Heart right ventricle (tissue), 16 donors: ENCODE measurements at regions of chr10 and their contacts with region 1.

Region 1: DNA sequence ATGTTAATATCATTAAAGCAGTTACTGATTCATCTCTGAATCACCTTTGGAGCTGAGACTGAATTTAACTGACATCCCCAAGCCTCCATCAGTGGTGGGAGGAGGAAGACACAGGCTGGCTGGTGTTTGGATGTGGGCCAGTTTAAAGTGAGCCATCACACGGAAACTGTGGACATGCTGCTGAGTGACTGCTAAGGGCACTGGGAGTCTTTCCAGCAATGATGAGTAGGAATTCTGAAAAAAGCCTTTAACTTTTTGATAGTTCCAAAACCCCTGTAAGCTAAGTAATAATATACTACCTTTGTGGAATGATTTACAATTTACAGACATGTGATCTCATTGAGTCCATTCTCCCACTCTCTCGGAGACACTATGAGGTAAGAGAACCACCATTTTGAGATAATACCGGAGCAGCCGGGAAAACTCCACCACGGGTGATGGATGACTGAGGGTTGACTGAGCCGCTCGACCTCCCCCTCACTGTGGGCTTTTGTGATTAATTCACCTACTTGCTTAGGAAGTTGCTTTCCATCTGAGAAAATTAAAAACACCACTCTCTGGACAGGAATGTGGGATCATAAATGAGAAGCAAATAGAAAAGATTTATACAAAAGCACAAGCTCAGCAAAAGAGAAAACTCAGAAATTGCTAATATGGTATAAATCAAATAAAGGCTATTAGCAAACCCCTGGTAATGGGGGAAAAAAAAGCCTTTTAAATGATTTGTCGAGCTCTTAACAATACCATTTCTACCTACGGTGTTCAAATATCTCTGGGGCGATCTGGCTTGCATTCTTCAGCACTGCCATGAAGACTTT is 194.8 kb downstream of the FANK1 start:
- DNase-seq: no peak
- ATAC-seq: peak in 1 of 8 donors; percentile 48
- H3K4me3 ChIP-seq: no peak overlapping the region
- H3K27ac ChIP-seq: no peak overlapping the region
- H3K4me1 ChIP-seq: peaks cover 0 to 30% (median 0%) of the 10 kb centered on the region in 9 donors
- H3K27me3 ChIP-seq: peaks cover 0 to 4% (median 0%) of the 10 kb centered on the region in 7 donors
- CTCF ChIP-seq: no peak

Region 2: DNA sequence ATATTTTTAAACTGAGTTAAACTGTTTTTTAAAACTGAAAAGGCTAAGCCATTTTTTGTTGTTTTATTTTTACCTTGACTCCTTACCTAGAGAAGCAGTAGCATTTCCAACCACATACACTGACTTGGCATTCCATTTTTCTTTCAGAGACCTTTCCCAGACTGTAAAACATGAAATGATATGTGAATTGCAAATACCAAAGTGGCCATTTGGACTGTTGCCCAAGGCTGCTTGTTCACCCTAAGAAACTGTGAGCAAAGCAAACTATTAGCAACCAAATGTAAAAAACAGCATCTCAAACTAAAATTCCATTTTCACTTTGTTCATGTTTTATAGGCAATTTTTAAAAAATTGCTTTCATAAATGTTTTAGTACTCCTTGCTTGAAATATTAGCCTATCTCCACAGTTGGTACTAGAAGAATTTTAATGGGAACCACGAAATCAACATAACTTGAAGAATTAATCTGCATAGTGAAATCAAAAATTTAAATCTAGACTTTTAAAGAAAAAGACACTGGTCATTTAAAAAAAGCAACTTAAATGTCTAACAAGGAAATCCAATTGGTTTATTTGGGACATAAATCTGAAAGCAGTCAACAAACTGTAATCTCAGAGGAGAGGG is 278.9 kb before region 1 on chr10:
- intact Hi-C with region 1: no loop called
- DNase-seq: no peak
- ATAC-seq: no peak
- H3K4me3 ChIP-seq: no peak overlapping the region
- H3K27ac ChIP-seq: no peak overlapping the region
- H3K4me1 ChIP-seq: no peaks in the 10 kb centered on the region
- H3K27me3 ChIP-seq: no peaks in the 10 kb centered on the region
- CTCF ChIP-seq: no peak

Region 3: DNA sequence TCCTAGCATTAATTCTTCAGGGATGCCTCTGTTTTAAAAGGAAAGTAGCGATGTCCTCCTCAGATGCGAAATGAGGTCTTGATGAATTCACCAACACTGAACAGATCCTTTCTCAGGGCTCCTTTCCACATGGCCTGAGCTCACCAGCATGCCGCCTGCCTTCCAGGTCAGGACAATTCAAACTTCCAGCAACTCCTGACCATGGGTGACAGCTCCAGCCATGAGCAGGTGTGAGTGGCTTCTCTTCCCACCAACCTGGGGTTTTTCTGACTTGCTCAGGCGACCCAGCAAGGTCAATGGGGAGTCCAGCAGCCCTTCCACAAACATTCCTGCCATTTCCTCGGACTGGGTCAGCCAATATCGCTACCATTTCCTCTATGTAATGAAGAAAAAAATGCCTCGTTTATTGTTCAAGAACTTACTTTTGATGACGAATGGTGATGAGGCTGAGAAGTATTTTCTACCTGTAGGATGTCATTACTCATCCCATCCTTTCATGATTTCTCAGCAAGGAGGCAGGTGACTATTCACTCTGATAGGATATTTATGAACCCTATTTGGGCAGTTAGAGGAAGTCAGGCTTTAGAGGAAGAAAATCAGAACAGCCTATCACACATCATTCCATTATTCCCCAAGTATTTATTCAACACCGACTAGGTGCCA is 16.2 kb before region 1 on chr10:
- intact Hi-C with region 1: loop called in 1 of 10 experiments (anchors 1 kb)
- DNase-seq: no peak
- ATAC-seq: no peak
- H3K4me3 ChIP-seq: no peak overlapping the region
- H3K27ac ChIP-seq: no peak overlapping the region
- H3K4me1 ChIP-seq: no peaks in the 10 kb centered on the region
- H3K27me3 ChIP-seq: peaks cover 0 to 9% (median 0%) of the 10 kb centered on the region in 7 donors
- CTCF ChIP-seq: no peak

Region 4: GRCh38 chr10:126113046-126113445 is 21.9 kb after region 1 on chr10:
- intact Hi-C with region 1: loop called in 1 of 10 experiments (anchors 2 kb)
- DNase-seq: no peak
- ATAC-seq: no peak
- H3K4me3 ChIP-seq: no peak overlapping the region
- H3K27ac ChIP-seq: no peak overlapping the region
- H3K4me1 ChIP-seq: peaks cover 0 to 28% (median 5%) of the 10 kb centered on the region in 9 donors
- H3K27me3 ChIP-seq: peaks cover 0 to 4% (median 0%) of the 10 kb centered on the region in 7 donors
- CTCF ChIP-seq: no peak

Region 5: GRCh38 chr10:126130271-126130731 is 39.2 kb after region 1 on chr10:
- intact Hi-C with region 1: no loop called
- DNase-seq: peak; percentile 22 to 48
- ATAC-seq: peak; percentile 71 to 87 (median 76)
- H3K4me3 ChIP-seq: no peak overlapping the region
- H3K27ac ChIP-seq: peak overlapping the region in 7 of 10 donors; percentile 27 to 75 (median 65)
- H3K4me1 ChIP-seq: peaks cover 0 to 29% (median 4%) of the 10 kb centered on the region in 9 donors
- H3K27me3 ChIP-seq: no peaks in the 10 kb centered on the region
- CTCF ChIP-seq: no peak

Region 6: DNA sequence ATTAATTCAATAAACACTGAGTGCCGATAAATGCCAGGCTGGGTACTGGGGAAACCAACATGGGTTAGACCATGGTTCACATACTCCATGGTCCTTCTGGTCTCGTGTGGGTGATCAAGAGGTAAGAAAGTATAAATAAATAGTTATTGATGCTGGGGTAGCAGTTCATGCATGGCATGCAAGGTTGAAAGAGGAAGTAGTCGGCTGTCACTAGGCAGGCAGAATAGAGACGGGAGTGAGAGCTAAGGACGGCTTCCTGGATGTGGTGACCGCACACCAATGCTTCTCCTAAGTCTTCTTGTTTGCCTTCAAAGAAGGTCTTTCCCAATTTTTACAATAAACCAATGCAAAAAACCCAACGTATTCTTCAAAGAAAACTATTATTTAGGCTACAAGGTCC is 88.5 kb after region 1 on chr10:
- intact Hi-C with region 1: no loop called
- DNase-seq: no peak
- ATAC-seq: no peak
- H3K4me3 ChIP-seq: no peak overlapping the region
- H3K27ac ChIP-seq: no peak overlapping the region
- H3K4me1 ChIP-seq: no peaks in the 10 kb centered on the region
- H3K27me3 ChIP-seq: no peaks in the 10 kb centered on the region
- CTCF ChIP-seq: no peak

Region 7: DNA sequence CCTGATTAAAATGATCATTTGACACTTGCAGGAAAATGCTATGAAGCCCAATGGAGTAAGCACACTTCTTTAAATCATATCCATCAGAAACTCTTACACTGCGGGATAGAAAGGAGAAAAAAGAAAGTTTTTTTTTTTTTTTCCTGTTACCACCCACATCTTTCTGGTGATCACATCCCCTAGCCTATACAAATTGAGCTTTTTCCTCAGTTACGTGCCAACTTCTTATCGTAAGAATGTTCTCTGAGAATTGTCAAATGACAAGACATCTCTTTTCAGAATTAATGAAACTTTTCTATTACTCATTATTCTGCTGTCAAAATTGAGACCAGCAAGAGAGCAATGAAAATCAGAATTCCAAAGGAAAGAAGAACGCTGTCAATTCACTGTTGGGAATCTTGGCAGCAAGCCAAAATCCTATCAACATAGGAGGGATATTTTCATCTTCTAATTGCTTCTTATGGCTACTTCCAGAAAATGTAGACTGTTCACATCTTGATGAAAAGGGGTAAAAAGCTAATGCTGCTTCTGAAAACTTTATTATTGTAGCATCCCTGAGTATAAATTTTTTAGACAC is 117.7 kb after region 1 on chr10:
- intact Hi-C with region 1: no loop called
- DNase-seq: no peak
- ATAC-seq: no peak
- H3K4me3 ChIP-seq: no peak overlapping the region
- H3K27ac ChIP-seq: no peak overlapping the region
- H3K4me1 ChIP-seq: peaks cover 0 to 18% (median 8%) of the 10 kb centered on the region in 9 donors
- H3K27me3 ChIP-seq: peaks cover 0 to 7% (median 3%) of the 10 kb centered on the region in 7 donors
- CTCF ChIP-seq: no peak